Panc1 (cell line): ENCODE measurements at regions of chr15 and their contacts with region 1.

Region 1: DNA sequence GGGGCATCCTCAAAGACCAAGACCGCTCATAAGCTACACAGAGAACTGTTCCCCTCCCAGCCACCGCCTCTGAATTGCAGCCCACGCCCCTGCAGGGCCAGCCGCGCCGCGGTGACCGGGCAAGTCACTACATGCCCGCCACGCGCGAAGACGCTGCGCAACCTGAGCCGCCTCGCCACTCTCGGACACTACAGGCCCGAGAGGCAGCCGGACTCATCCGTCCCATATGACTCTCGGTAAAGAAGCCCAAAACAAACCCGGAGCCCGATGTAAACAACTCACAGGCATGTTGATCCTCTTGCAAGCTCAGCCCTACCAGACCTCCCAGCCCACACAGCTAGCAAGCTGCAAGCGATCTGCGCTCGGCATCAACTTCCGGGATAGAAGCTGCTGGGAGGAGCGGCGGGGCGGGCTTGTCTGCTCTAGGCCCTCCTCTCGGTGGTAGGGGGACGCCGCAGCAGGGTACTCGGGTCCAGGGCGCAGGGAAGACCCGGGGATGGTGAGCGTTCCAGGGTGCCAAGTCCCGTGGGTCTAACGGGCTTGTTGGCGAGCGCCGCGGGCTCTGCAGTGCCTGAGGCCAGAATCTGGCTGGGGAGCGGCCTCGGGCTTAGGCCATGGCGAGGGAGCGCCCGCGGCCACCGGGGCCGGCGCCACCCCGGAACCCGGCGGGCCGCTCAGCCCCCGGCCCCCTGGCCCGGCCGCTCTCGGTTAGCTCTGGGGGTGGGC is at the start of gene RPS27L:
- DNase-seq: no peak
- ATAC-seq: peak; percentile 99
- H3K4me3 ChIP-seq: peak within 1 kb of the TSS; percentile 81 to 86
- H3K27ac ChIP-seq: peak within 1 kb of the TSS; percentile 90
- H3K4me1 ChIP-seq: peaks cover 9% of the 10 kb centered on the region; the same call in 1 of the 2 replicates
- H3K27me3 ChIP-seq: no peaks in the 10 kb centered on the region
- CTCF ChIP-seq: no peak
- total RNA-seq, gene RPS27L: 61.3 TPM

Region 2: GRCh38 chr15:62782039-62782791 is 375.1 kb before region 1 on chr15:
- CTCF ChIA-PET with region 1: no interaction called
- POLR2A ChIA-PET with region 1: no interaction called
- in situ Hi-C with region 1: no loop called
- intact Hi-C with region 1: no loop called
- DNase-seq: peak; percentile 69
- ATAC-seq: peak; percentile 95
- H3K4me3 ChIP-seq: no peak overlapping the region
- H3K27ac ChIP-seq: peak overlapping the region; percentile 64
- H3K4me1 ChIP-seq: peaks cover 24% of the 10 kb centered on the region
- H3K27me3 ChIP-seq: no peaks in the 10 kb centered on the region
- CTCF ChIP-seq: peak; percentile 86

Region 3: GRCh38 chr15:63094495-63094931 is 62.8 kb before region 1 on chr15:
- CTCF ChIA-PET with region 1: no interaction called
- POLR2A ChIA-PET with region 1: no interaction called
- in situ Hi-C with region 1: no loop called
- intact Hi-C with region 1: no loop called
- DNase-seq: no peak
- ATAC-seq: no peak
- H3K4me3 ChIP-seq: no peak overlapping the region
- H3K27ac ChIP-seq: peak overlapping the region; percentile 48
- H3K4me1 ChIP-seq: peaks cover 7% of the 10 kb centered on the region; the same call in 1 of the 2 replicates
- H3K27me3 ChIP-seq: no peaks in the 10 kb centered on the region
- CTCF ChIP-seq: no peak

Region 4: GRCh38 chr15:63240109-63240508 is 82.8 kb after region 1 on chr15:
- CTCF ChIA-PET with region 1: no interaction called
- POLR2A ChIA-PET with region 1: interaction called, 11 read pairs
- in situ Hi-C with region 1: no loop called
- intact Hi-C with region 1: no loop called
- DNase-seq: no peak
- ATAC-seq: no peak
- H3K4me3 ChIP-seq: no peak overlapping the region
- H3K27ac ChIP-seq: no peak overlapping the region
- H3K4me1 ChIP-seq: no peaks in the 10 kb centered on the region
- H3K27me3 ChIP-seq: no peaks in the 10 kb centered on the region
- CTCF ChIP-seq: no peak

Region 5: GRCh38 chr15:63277038-63277892 is 120.0 kb after region 1 on chr15 and contains the start of gene APH1B:
- CTCF ChIA-PET with region 1: interaction called, 10 read pairs
- POLR2A ChIA-PET with region 1: no interaction called
- in situ Hi-C with region 1: no loop called
- intact Hi-C with region 1: no loop called
- DNase-seq: no peak
- ATAC-seq: peak; percentile 97
- H3K4me3 ChIP-seq: peak within 1 kb of the TSS; percentile 75 to 76
- H3K27ac ChIP-seq: peak within 1 kb of the TSS; percentile 80
- H3K4me1 ChIP-seq: peaks cover 9% of the 10 kb centered on the region
- H3K27me3 ChIP-seq: no peaks in the 10 kb centered on the region
- CTCF ChIP-seq: no peak
- total RNA-seq, gene APH1B: 14.0 TPM

Region 6: GRCh38 chr15:63497642-63498467 is 340.6 kb after region 1 on chr15:
- CTCF ChIA-PET with region 1: no interaction called
- POLR2A ChIA-PET with region 1: no interaction called
- in situ Hi-C with region 1: no loop called
- intact Hi-C with region 1: no loop called
- DNase-seq: no peak
- ATAC-seq: no peak
- H3K4me3 ChIP-seq: no peak overlapping the region
- H3K27ac ChIP-seq: peak overlapping the region; percentile 65
- H3K4me1 ChIP-seq: peaks cover 80% of the 10 kb centered on the region
- H3K27me3 ChIP-seq: no peaks in the 10 kb centered on the region
- CTCF ChIP-seq: no peak